ENCODE measurements at regions of chr7 and their contacts with region 1.

Region 1: DNA sequence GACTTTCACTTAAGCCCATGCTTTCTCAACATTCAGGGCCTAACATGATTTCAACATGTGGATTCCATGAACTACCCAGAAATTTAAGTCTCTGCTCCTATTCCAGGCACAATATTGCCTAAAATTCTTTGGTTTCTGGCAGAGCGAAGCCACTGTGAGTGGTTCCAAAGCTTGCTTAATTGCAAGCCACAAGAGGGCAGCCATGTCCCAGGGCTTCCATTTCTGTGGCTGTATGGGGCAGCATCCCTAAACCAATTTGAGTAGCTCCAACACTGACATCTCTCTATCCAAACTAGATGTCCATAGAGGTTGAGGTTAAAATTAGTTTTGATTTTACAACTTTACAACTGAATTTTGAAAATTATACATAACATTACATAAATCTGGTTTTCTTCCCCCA is 56.3 kb upstream of the MDFIC start:
- DNase-seq: peak; percentile 2 to 74 (median 40)
- ATAC-seq: peak; percentile 50 to 79 (median 72)
- H3K4me3 ChIP-seq: no peak overlapping the region
- H3K4me3 Mint-ChIP-seq: no peak overlapping the region
- H3K27ac ChIP-seq: no peak overlapping the region
- H3K27ac Mint-ChIP-seq: no peak overlapping the region
- H3K4me1 ChIP-seq: no peaks in the 10 kb centered on the region
- H3K4me1 Mint-ChIP-seq: peaks cover 0 to 5% (median 2%) of the 10 kb centered on the region in 3 donors
- H3K27me3 ChIP-seq: no peaks in the 10 kb centered on the region
- H3K27me3 Mint-ChIP-seq: no peaks in the 10 kb centered on the region

Region 2: GRCh38 chr7:115099906-115100305 is 234.3 kb after region 1 on chr7:
- CTCF ChIA-PET with region 1: no interaction called
- POLR2A ChIA-PET with region 1: no interaction called
- DNase-seq: no peak
- ATAC-seq: no peak
- H3K4me3 ChIP-seq: no peak overlapping the region
- H3K4me3 Mint-ChIP-seq: no peak overlapping the region
- H3K27ac ChIP-seq: no peak overlapping the region
- H3K27ac Mint-ChIP-seq: no peak overlapping the region
- H3K4me1 ChIP-seq: no peaks in the 10 kb centered on the region
- H3K4me1 Mint-ChIP-seq: peaks cover 7 to 8% (median 7%) of the 10 kb centered on the region in 3 donors
- H3K27me3 ChIP-seq: no peaks in the 10 kb centered on the region
- H3K27me3 Mint-ChIP-seq: no peaks in the 10 kb centered on the region

Region 3: DNA sequence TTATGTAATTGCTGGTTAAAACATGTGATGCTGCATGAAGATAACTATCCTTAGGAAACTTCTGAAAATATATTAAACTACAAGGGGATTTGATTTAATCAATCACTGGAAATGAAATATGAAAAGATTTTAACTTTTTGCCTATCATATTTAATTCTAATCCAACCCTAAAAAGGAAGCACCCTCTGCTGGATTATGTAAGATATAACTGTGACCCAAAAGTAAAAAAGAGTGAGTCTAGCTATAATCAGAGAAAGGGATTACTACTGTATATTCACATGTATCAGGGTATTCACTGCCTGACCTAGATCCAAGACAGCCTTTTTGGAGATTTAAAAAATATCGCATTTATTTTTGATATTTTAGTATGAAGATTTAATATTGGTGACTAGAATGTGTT is 351.8 kb after region 1 on chr7:
- CTCF ChIA-PET with region 1: interaction called, 51 to 80 read pairs
- POLR2A ChIA-PET with region 1: no interaction called
- DNase-seq: peak in 1 of 35 experiments; percentile 18
- ATAC-seq: peak in 2 of 4 experiments; percentile 35 to 55
- H3K4me3 ChIP-seq: no peak overlapping the region
- H3K4me3 Mint-ChIP-seq: no peak overlapping the region
- H3K27ac ChIP-seq: no peak overlapping the region
- H3K27ac Mint-ChIP-seq: peak overlapping the region in 1 of 2 donors; percentile 1
- H3K4me1 ChIP-seq: peaks cover 0 to 11% of the 10 kb centered on the region in 2 experiments
- H3K4me1 Mint-ChIP-seq: peaks cover 10 to 13% (median 12%) of the 10 kb centered on the region in 3 donors
- H3K27me3 ChIP-seq: no peaks in the 10 kb centered on the region
- H3K27me3 Mint-ChIP-seq: no peaks in the 10 kb centered on the region

Region 4: DNA sequence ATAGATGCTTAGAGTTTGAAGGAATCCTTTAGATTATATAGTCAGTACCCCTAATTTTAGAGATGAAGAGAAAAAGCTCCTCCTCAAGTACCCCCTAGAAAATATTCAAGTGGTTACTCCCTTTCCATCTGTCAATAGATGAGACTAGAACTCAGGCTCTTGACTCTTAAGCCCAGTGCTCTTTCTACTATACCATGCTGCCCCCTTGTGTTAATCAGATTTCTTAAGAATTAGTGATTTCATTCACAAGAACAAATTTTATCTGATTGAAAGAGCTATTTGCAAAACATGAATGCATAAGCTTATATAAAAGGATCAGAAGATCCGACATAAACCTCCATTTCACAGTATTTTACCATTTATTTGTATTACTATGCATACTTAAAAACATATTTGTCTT is 985.7 kb after region 1 on chr7:
- CTCF ChIA-PET with region 1: interaction called, 7 to 22 read pairs
- POLR2A ChIA-PET with region 1: no interaction called
- DNase-seq: peak in 1 of 35 experiments; percentile 41
- ATAC-seq: no peak
- H3K4me3 ChIP-seq: no peak overlapping the region
- H3K4me3 Mint-ChIP-seq: no peak overlapping the region
- H3K27ac ChIP-seq: no peak overlapping the region
- H3K27ac Mint-ChIP-seq: no peak overlapping the region
- H3K4me1 ChIP-seq: no peaks in the 10 kb centered on the region
- H3K4me1 Mint-ChIP-seq: no peaks in the 10 kb centered on the region
- H3K27me3 ChIP-seq: no peaks in the 10 kb centered on the region
- H3K27me3 Mint-ChIP-seq: peaks cover 1 to 8% of the 10 kb centered on the region in 2 donors